Prostate gland (tissue), 2 donors: ENCODE measurements at regions of chr2 and their contacts with region 1.

Region 1: GRCh38 chr2:677056-677965 is at the start of gene TMEM18:
- DNase-seq: peak; percentile 95
- H3K4me3 ChIP-seq: peak within 1 kb of the TSS; percentile 57 to 72
- H3K27ac ChIP-seq: peak within 1 kb of the TSS; percentile 95 to 98
- H3K4me1 ChIP-seq: no peaks in the 10 kb centered on the region
- H3K27me3 ChIP-seq: no peaks in the 10 kb centered on the region
- CTCF ChIP-seq: peak in 2 of 4 experiments; percentile 54 to 66
- POLR2A ChIP-seq: peak; percentile 72
- total RNA-seq, gene TMEM18: 17.7 to 19.3 TPM

Region 2: DNA sequence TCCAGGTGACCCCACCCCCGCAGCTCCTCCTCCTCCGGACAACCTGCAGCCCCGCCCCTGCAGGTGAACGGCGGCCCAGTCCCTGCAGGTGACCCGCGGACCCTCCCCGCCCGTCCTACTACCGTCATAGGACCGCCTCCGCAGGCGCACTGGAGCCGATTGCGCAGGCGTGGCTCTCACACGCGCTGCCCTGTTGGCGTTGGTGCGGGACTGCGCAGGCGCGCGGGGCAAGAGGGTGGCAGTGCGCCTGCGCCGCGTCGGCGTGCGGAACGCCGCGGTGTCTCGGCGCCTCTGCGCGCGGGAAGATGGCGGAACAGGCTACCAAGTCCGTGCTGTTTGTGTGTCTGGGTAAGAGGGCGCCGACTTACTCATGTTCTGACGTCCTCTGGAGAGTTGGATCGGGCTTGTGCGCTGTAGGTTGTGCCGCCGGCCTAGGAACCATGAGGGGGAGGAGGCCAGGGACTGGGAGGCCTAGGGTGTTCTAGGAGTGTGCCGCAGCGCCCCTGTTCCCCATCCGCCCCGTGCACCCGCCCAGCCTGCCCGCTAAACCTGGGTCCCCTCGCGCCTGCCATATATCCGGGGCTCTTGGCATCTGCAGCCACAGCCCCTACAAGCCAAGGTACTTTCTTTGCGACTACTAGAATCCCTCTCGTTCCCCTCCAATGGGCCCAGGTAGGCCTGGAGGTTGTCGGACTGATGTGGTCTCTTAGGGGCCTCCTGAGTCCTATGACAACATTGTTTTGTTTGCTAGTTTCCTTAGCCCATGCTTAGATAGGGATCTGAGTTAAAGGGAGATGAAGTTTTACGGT is 412.4 kb before region 1 on chr2 and contains the start of gene ACP1:
- intact Hi-C with region 1: loop called (anchors 10 kb)
- DNase-seq: peak; percentile 98
- H3K4me3 ChIP-seq: peak within 1 kb of the TSS; percentile 72 to 80
- H3K27ac ChIP-seq: peak within 1 kb of the TSS; percentile 92 to 93
- H3K4me1 ChIP-seq: no peaks in the 10 kb centered on the region
- H3K27me3 ChIP-seq: no peaks in the 10 kb centered on the region
- CTCF ChIP-seq: peak in 2 of 4 experiments; percentile 34
- POLR2A ChIP-seq: peak; percentile 96
- total RNA-seq, gene ACP1: 96.9 to 116 TPM

Region 3: DNA sequence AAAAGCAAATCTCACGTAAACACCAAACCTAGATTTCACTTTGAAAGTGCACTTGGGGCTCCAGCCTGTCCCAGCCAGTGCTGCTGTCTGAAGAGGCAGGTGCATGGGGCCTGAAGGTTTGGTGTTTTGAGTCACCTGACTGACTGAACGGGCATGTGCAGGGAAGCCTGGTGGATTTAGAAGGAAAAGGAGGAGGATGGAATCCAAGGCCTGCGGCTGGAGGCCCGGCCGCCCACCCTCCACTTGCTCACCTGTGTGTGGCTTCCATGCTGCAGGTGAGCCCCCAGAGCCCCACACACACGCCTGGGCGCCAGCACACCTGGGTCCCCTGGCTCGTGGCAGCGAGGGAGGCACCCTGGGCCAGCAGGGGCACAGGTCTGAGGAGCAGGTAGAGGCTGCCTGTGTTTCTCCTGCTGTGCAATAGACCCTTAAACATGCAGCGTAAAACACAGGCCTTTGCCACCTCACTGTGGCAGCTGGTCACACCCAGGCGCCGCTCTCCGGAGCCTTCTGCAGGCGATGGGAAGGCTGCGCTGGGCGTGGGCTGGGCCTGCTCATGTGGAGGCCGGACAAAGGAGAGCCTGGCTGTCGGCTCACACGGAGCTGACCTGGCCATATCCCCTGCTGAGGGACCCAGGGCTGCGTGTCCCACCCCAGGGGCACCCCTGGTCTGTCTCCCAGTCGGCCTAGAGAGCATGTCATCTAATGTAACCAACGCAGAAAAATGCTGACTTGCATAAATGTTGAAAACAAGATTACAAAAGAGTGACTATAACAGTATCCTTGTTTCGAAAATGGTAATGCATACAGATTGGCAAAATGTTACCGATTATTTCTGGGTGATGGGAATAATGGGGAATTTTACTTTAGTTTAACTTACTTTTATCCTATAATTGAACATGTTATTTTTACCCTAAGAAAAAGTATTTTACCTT is 71.4 kb before region 1 on chr2:
- intact Hi-C with region 1: no loop called
- DNase-seq: no peak
- H3K4me3 ChIP-seq: no peak overlapping the region
- H3K27ac ChIP-seq: no peak overlapping the region
- H3K4me1 ChIP-seq: no peaks in the 10 kb centered on the region
- H3K27me3 ChIP-seq: no peaks in the 10 kb centered on the region
- CTCF ChIP-seq: no peak
- POLR2A ChIP-seq: no peak

Region 4: GRCh38 chr2:741195-741496 is 63.8 kb after region 1 on chr2:
- intact Hi-C with region 1: loop called (anchors 5 kb)
- DNase-seq: no peak
- H3K4me3 ChIP-seq: peak overlapping the region; percentile 26 to 39
- H3K27ac ChIP-seq: peak overlapping the region in 1 of 2 donors; percentile 72
- H3K4me1 ChIP-seq: no peaks in the 10 kb centered on the region
- H3K27me3 ChIP-seq: no peaks in the 10 kb centered on the region
- CTCF ChIP-seq: no peak
- POLR2A ChIP-seq: no peak

Region 5: GRCh38 chr2:833180-833579 is 155.9 kb after region 1 on chr2:
- intact Hi-C with region 1: no loop called
- DNase-seq: peak; percentile 0
- H3K4me3 ChIP-seq: no peak overlapping the region
- H3K27ac ChIP-seq: no peak overlapping the region
- H3K4me1 ChIP-seq: no peaks in the 10 kb centered on the region
- H3K27me3 ChIP-seq: no peaks in the 10 kb centered on the region
- CTCF ChIP-seq: no peak
- POLR2A ChIP-seq: no peak